ENCODE measurements at regions of chr10 and their contacts with region 1.

Region 1: GRCh38 chr10:52313933-52314816 is at the start of gene DKK1:
- DNase-seq: peak in 1 of 4 experiments; percentile 14
- ATAC-seq: peak; percentile 63
- H3K4me3 ChIP-seq: no peak within 1 kb of the TSS
- H3K27ac ChIP-seq: no peak within 1 kb of the TSS
- H3K4me1 ChIP-seq: peaks cover 0 to 3% of the 10 kb centered on the region in 2 experiments; a peak in 1 of 5 replicates
- H3K27me3 ChIP-seq: no peaks in the 10 kb centered on the region
- CTCF ChIP-seq: peak; percentile 16 to 36 (median 31); a peak in 3 of 6 replicates
- EP300 ChIP-seq: no peak
- POLR2A ChIP-seq: no peak
- RAD21 ChIP-seq: 0 out of 4 replicates have a peak, but pooled peaks of 1 of the 2 experiments have one; percentile 7
- polyA plus RNA-seq, gene DKK1: not detected

Region 2: DNA sequence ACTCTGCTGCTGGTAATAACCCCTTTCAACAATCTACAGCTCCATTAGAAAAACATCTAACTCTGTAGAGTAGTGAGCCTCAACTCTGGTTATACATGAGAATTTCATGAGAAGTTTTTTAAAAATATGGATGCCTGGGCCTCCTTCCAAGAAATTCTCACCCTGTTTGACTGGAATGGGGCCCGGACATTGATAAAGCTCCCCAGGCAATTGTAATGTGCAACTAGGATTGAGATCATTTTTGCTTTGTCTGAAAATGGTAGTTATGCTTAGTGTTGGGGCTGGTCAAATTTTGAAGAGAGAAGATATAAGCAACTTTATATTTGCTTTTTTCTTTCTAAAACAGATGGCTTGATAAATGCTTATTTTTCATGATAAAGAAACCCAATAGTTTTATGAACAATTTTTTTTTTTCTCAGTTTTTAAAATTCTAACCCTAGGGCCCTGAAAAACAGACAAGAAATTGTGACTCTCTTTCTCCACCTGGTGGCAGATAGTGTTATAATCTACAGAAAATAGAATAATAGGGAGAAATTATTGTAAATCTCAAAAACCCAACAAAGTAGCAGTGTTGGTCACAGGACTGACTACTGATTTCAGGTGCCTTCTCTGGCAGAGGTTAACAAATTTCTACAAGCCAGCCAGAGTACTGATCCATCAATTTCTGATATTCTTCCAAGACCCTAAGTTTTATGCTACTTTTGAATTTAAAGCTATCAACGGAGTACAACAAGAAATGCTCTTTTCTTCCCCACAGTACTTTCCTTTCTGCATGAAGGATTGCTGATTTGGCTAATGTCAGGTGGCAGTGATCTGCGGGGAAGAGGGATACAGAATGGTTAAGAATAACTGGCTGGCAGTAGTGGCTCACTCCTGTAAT is 174.7 kb after region 1 on chr10:
- CTCF ChIA-PET with region 1: no interaction called
- POLR2A ChIA-PET with region 1: no interaction called
- in situ Hi-C with region 1: no loop called
- intact Hi-C with region 1: loop called (anchors 5 kb)
- DNase-seq: peak in 3 of 4 experiments; percentile 6 to 14 (median 8)
- ATAC-seq: no peak
- H3K4me3 ChIP-seq: no peak overlapping the region
- H3K27ac ChIP-seq: no peak overlapping the region
- H3K4me1 ChIP-seq: no peaks in the 10 kb centered on the region
- H3K27me3 ChIP-seq: no peaks in the 10 kb centered on the region
- CTCF ChIP-seq: peak in 2 of 3 experiments; percentile 14 to 33; a peak in 1 of 6 replicates
- EP300 ChIP-seq: no peak
- POLR2A ChIP-seq: no peak
- RAD21 ChIP-seq: peak in 1 of 2 experiments; percentile 32; a peak in 1 of 4 replicates

Region 3: GRCh38 chr10:52639652-52640051 is 325.5 kb after region 1 on chr10:
- CTCF ChIA-PET with region 1: no interaction called
- POLR2A ChIA-PET with region 1: no interaction called
- in situ Hi-C with region 1: no loop called
- intact Hi-C with region 1: no loop called
- DNase-seq: no peak
- ATAC-seq: no peak
- H3K4me3 ChIP-seq: no peak overlapping the region
- H3K27ac ChIP-seq: no peak overlapping the region
- H3K4me1 ChIP-seq: no peaks in the 10 kb centered on the region
- H3K27me3 ChIP-seq: no peaks in the 10 kb centered on the region
- CTCF ChIP-seq: no peak
- EP300 ChIP-seq: no peak
- POLR2A ChIP-seq: no peak
- RAD21 ChIP-seq: no peak